ENCODE measurements at regions of chr1 and their contacts with region 1.

Region 1: GRCh38 chr1:241627453-241628259 is 12.5 kb downstream of the CHML start:
- DNase-seq: peak in 9 of 10 donors; percentile 12 to 78 (median 60)
- ATAC-seq: peak; percentile 84 to 87
- H3K4me3 Mint-ChIP-seq: peak overlapping the region; percentile 76 to 90 (median 84)
- H3K27ac Mint-ChIP-seq: peak overlapping the region; percentile 89 to 97 (median 94)
- H3K4me1 Mint-ChIP-seq: peaks cover 10 to 36% (median 24%) of the 10 kb centered on the region in 4 donors
- H3K27me3 Mint-ChIP-seq: no peaks in the 10 kb centered on the region

Region 2: GRCh38 chr1:241611063-241611462 is 16.6 kb before region 1 on chr1:
- POLR2A ChIA-PET with region 1: interaction called, 13 read pairs
- DNase-seq: peak in 5 of 10 donors; percentile 6 to 71 (median 64)
- ATAC-seq: peak; percentile 87 to 97
- H3K4me3 Mint-ChIP-seq: no peak overlapping the region
- H3K27ac Mint-ChIP-seq: no peak overlapping the region
- H3K4me1 Mint-ChIP-seq: peaks cover 0 to 2% (median under 1%) of the 10 kb centered on the region in 4 donors
- H3K27me3 Mint-ChIP-seq: no peaks in the 10 kb centered on the region

Measured in naive thymus-derived CD8-positive, alpha-beta T cell (primary cell).